ENCODE measurements at regions of chr19 and their contacts with region 1.

Region 1: DNA sequence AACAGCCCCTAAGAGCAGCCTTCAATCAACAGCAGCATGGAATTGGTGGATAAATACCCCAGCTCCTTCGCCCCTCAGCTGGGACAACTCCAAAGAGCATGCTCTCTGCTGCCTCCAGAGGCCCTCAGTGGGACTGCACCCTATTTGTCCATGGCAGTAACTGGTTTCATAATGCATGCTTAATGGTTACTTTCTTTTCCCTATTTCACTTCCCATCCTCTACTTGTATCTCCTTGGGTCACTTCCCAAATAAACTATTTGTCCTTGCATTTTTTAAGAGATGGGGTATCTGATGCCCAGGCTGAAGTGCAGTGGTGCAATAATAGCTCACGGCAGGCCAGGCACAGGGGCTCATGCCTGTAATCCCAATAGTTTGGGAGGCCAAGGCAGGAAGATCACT is 13.5 kb upstream of the TPM4 start:
- DNase-seq: peak in 1 of 2 donors; percentile 65
- H3K4me3 ChIP-seq: no peak overlapping the region
- H3K27ac ChIP-seq: no peak overlapping the region
- H3K4me1 ChIP-seq: peaks cover 0 to 27% of the 10 kb centered on the region in 2 donors
- H3K27me3 ChIP-seq: no peaks in the 10 kb centered on the region
- CTCF ChIP-seq: peak; percentile 41 to 72 (median 67)

Region 2: DNA sequence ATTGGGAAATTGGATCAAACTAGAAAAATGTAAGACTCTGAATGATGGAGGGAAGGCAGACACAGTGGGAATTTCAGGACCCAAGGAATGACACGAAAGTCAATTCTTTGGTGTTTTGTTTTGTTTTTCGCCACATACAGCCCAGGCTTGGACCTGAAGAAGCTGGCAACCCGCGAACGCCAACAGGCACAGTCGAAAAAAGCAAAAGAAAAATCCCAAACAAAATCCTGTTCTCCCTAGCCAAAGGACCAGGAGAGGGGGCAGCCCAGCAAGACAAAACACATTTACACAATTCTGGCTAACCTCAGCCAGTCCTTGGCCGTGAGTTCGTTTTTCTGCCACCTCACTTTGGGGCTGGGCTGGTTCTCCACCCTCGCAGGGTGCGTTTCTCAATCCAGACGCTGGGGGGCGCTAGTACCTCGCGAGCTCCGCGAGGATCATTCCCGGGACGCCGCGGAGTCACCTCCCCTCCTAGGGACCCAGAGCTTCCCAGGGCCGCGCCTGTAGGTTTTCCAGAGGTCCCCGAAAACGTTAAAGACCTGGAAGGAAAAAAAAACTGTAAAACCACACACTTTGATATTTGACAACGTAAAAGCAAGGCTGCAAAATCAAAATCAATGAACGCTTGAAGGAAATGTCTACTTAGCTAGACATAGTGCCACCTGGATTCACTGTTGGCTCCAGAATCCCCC is 21.3 kb before region 1 on chr19:
- intact Hi-C with region 1: loop called (anchors 2 kb)
- DNase-seq: peak in 1 of 2 donors; percentile 91
- H3K4me3 ChIP-seq: peak overlapping the region in 1 of 2 donors; percentile 49
- H3K27ac ChIP-seq: peak overlapping the region; percentile 55 to 80
- H3K4me1 ChIP-seq: peaks cover 3 to 12% of the 10 kb centered on the region in 2 donors
- H3K27me3 ChIP-seq: no peaks in the 10 kb centered on the region
- CTCF ChIP-seq: peak; percentile 96 to 99 (median 96)

Region 3: DNA sequence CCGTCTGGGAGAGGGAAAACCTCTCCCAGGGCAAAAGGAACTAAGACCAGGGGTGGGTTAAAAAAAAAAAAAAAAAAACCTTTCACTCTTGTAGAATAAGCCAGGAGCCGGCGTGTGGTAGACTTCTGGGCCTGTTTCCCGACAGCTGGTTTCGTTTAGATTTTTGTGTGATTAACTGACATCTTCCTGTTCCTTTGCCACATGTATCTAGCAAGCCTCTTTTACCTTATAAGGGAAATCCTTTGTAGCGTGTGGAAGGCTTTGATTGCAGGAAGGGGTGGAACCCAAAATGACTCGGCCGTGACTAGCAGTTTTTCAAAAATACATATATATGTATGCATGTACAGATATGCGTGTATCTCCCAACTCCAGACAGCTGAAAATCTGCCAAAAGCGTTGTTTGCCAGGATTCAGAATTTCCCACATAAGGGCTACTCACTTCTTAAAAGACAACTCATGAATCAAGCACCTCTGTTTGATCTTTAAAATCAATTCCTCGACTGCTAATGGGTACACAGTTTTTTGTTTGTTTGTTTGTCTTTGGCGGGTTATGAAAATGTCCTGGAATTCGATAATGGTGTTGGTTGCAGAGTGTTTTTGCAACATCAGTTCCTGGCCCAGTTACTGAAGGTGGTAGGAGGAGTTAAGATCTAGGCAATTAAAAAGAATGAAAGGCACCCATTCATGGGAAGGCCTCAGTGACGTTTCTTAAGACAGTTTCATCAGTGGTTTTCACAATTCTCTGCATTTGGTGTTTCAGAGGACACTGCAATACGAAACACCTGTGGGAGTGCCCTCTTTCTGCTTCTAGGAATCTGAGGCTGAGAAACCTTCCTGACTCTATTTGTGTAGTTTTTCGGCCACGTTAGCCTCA is 16.2 kb after region 1 on chr19:
- intact Hi-C with region 1: loop called (anchors 1 kb)
- DNase-seq: peak in 1 of 2 donors; percentile 94
- H3K4me3 ChIP-seq: peak overlapping the region; percentile 94 to 95
- H3K27ac ChIP-seq: peak overlapping the region; percentile 99 to 100
- H3K4me1 ChIP-seq: peaks cover 10 to 46% of the 10 kb centered on the region in 2 donors
- H3K27me3 ChIP-seq: no peaks in the 10 kb centered on the region
- CTCF ChIP-seq: no peak

Region 4: DNA sequence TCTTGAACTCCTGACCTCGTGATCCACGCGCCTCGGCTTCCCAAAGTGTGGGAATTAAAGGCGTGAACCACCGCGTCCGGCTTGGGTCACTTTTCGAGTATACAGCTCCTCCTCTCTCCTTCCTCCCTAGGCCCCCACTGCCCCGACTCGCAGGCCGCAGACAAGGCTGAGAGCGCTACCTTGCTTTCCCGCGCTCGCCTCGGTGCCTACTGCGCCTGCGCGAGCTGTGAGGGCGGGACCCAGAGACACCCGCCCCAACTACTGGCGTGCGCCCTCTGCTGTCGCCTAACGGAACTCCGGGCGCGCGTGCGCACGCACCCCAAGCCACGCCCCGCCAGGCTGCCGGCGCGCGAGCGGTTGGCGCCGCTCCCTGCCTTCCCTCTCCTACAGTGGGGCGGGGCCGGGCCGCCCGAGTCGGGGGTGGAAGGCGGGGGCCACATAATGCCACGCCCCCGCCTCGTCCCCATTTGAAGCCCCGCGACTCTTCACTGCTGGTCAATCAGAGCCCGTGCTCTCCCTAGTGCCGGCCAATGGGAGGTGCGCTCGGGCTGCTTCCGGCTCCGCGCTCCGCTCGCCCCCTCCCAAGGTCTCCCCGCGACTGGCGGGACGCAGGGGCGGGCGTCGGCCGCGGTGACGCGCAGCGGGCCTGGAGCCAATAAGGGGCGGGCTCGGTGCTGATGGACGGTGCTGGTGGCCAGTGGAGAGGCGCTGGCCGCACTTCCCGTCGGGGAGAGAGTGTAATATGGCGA is 48.5 kb after region 1 on chr19 and contains the start of gene RAB8A:
- intact Hi-C with region 1: loop called (anchors 1 kb)
- DNase-seq: peak; percentile 98 to 99
- H3K4me3 ChIP-seq: peak within 1 kb of the TSS; percentile 96 to 97
- H3K27ac ChIP-seq: peak within 1 kb of the TSS; percentile 88 to 91
- H3K4me1 ChIP-seq: peaks cover 16 to 22% of the 10 kb centered on the region in 2 donors
- H3K27me3 ChIP-seq: no peaks in the 10 kb centered on the region
- CTCF ChIP-seq: peak; percentile 94 to 100 (median 94)
- total RNA-seq, gene RAB8A: 35.1 TPM

Region 5: DNA sequence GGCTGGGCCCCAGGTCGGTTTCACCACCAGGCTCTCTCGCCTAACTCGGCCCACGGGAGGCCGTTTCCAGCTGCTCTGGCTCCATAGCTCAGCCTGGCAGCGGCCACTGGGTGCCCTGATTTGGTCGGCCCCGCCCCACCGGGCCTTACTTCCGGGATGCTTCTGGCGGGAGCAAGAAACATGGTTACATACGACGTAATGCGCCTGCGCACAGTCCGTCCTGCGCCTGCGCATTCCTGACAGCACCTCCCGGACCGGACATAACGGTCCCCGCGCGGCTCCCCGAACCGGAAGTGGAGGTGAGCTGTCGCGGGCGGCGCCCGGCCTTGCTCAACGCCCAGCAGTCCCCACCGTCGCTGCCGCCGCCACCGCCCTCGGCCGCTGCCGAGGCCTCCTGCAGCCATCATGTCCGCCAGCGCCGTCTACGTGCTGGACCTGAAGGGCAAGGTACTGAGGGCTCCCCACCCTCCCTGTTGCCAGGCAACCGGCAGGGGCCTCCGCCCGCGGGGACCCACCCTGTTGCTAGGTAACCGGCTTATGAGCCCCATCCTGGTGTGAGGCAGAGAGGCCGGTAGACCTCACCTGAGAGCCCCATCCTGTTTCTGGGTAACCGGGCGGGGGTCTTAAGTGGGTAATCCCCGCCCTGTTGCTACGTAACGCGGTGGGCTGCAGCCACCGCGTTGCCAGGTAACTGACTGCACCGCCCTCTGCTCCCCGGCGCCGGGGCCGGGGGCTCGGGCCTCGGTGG is 135.0 kb after region 1 on chr19 and contains the start of gene AP1M1:
- intact Hi-C with region 1: loop called (anchors 5 kb)
- DNase-seq: peak; percentile 91 to 99
- H3K4me3 ChIP-seq: peak within 1 kb of the TSS; percentile 87 to 93
- H3K27ac ChIP-seq: peak within 1 kb of the TSS; percentile 84
- H3K4me1 ChIP-seq: peaks cover 3 to 25% of the 10 kb centered on the region in 2 donors
- H3K27me3 ChIP-seq: no peaks in the 10 kb centered on the region
- CTCF ChIP-seq: no peak
- total RNA-seq, gene AP1M1: 162 TPM